Astrocyte of the cerebellum (primary cell): ENCODE measurements at regions of chr7 and their contacts with region 1.

Region 1: GRCh38 chr7:132402751-132403245 is 173.5 kb downstream of the PLXNA4 start:
- DNase-seq: peak; percentile 96
- H3K4me3 ChIP-seq: no peak overlapping the region
- CTCF ChIP-seq: no peak

Region 2: GRCh38 chr7:132351954-132352499 is 50.8 kb before region 1 on chr7:
- in situ Hi-C with region 1: loop called (anchors 5 kb)
- DNase-seq: no peak
- H3K4me3 ChIP-seq: no peak overlapping the region
- CTCF ChIP-seq: no peak